Activated naive CD4-positive, alpha-beta T cell treated with anti-CD3 and anti-CD28 coated beads for 36 hours (primary cell): ENCODE measurements at regions of chr5 and their contacts with region 1.

Region 1: GRCh38 chr5:102747386-102748166 is 7.5 kb upstream of the PAM start:
- DNase-seq: no peak
- H3K4me3 Mint-ChIP-seq: no peak overlapping the region
- H3K27ac Mint-ChIP-seq: peak overlapping the region; percentile 25
- H3K4me1 Mint-ChIP-seq: peaks cover 28% of the 10 kb centered on the region
- H3K27me3 Mint-ChIP-seq: peaks cover 10% of the 10 kb centered on the region

Region 2: GRCh38 chr5:102596113-102596512 is 151.5 kb before region 1 on chr5:
- CTCF ChIA-PET with region 1: no interaction called
- intact Hi-C with region 1: loop called (anchors 5 kb)
- DNase-seq: no peak
- H3K4me3 Mint-ChIP-seq: no peak overlapping the region
- H3K27ac Mint-ChIP-seq: no peak overlapping the region
- H3K4me1 Mint-ChIP-seq: peaks cover 18% of the 10 kb centered on the region
- H3K27me3 Mint-ChIP-seq: no peaks in the 10 kb centered on the region

Region 3: GRCh38 chr5:102718819-102719218 is 28.8 kb before region 1 on chr5:
- CTCF ChIA-PET with region 1: interaction called, 4 read pairs
- intact Hi-C with region 1: loop called (anchors 2 kb)
- DNase-seq: no peak
- H3K4me3 Mint-ChIP-seq: no peak overlapping the region
- H3K27ac Mint-ChIP-seq: no peak overlapping the region
- H3K4me1 Mint-ChIP-seq: peaks cover 6% of the 10 kb centered on the region
- H3K27me3 Mint-ChIP-seq: peaks cover 31% of the 10 kb centered on the region

Region 4: DNA sequence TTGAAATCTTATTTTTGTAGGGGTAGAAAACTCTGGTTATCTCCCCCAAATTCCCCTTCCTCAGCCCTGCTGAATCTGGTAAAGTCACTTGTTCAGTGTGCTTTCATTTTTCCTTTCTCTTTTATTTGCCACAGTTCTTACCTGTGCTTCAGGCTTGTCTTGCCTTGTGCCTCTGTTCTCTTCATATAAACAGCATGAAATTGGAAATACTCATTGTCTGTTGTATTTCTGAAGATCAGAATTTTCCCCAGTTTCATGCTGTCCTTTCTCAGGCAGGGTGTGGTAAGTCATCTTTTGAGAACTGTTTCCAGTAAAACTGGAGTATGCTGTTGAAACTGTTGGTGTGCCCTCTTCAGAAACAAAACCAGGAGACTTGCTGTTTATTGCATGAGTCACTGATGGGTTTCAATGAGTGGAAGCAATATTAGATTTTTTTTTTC is 14.5 kb after region 1 on chr5:
- CTCF ChIA-PET with region 1: interaction called, 11 read pairs
- intact Hi-C with region 1: loop called (anchors 1 kb)
- DNase-seq: no peak
- H3K4me3 Mint-ChIP-seq: peak overlapping the region; percentile 48
- H3K27ac Mint-ChIP-seq: peak overlapping the region; percentile 86
- H3K4me1 Mint-ChIP-seq: peaks cover 82% of the 10 kb centered on the region
- H3K27me3 Mint-ChIP-seq: no peaks in the 10 kb centered on the region

Region 5: DNA sequence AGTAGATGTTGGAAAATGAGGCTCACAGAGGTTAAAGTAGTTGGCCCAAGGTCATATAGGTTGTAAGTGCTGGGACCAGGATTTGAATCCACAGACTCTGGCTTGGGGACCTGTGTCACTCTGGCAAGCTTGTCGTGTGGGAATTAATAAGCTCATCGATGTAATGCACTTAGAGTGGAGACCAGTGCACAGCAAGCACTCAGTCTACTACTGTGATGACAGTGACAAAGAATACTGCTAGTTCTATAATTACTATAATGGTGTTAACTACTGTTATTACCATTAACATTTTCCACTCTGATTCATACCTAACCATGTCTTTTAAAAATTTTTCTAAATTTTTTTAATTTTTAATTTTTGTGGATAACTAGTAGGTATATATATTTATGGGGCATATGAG is 20.3 kb after region 1 on chr5:
- CTCF ChIA-PET with region 1: interaction called, 3 read pairs
- intact Hi-C with region 1: loop called (anchors 1 kb)
- DNase-seq: peak; percentile 49
- H3K4me3 Mint-ChIP-seq: no peak overlapping the region
- H3K27ac Mint-ChIP-seq: peak overlapping the region; percentile 74
- H3K4me1 Mint-ChIP-seq: peaks cover 59% of the 10 kb centered on the region
- H3K27me3 Mint-ChIP-seq: no peaks in the 10 kb centered on the region